HepG2 (cell line): ENCODE measurements at regions of chr2 and their contacts with region 1.

Region 1: DNA sequence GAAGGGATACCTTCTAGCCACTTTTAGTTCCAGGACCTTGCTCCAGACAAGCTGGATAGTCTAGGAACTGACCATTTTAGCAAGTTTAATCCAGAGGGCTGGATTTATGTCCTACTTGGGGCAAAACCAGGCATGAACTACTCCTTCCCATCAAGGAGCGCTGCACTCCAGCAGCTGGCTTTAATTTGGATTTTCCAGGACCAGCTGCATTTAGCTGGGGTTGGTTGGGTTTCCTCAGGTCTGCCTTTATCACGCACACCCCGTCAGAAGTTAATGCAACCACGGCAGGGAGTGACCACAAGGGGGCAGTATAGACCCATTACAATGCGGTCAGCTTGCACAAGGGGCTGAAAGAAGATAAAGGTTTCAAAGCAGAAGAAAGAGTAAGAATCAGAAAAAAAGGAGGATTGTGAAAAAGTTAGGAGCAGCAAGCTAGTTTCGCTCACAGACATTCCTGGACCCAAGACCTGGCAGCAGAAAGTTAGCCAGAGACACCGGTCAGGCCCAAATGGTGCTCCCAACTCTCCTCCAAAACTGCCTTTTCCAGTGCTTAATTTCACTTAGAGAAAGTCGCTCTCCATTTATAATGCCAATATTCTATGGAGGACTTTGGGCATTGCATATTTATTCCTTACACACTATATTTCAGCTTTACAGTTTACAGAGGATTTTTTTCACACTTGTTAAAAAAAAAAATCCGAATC is 40.1 kb downstream of the SLC4A1AP start:
- DNase-seq: peak; percentile 80
- ATAC-seq: peak; percentile 85
- H3K4me3 ChIP-seq: no peak overlapping the region
- H3K27ac ChIP-seq: no peak overlapping the region
- H3K4me1 ChIP-seq: peaks cover 55% of the 10 kb centered on the region
- H3K27me3 ChIP-seq: no peaks in the 10 kb centered on the region
- CTCF ChIP-seq: peak; percentile 96
- EP300 ChIP-seq: no peak
- POLR2A ChIP-seq: no peak
- RAD21 ChIP-seq: peak; percentile 87

Region 2: GRCh38 chr2:27683390-27684071 is 20.3 kb before region 1 on chr2:
- CTCF ChIA-PET with region 1: interaction called, 12 read pairs
- POLR2A ChIA-PET with region 1: no interaction called
- in situ Hi-C with region 1: no loop called
- intact Hi-C with region 1: no loop called
- DNase-seq: peak; percentile 97
- ATAC-seq: peak; percentile 96
- H3K4me3 ChIP-seq: no peak overlapping the region
- H3K27ac ChIP-seq: peak overlapping the region; percentile 7
- H3K4me1 ChIP-seq: peaks cover 11% of the 10 kb centered on the region
- H3K27me3 ChIP-seq: no peaks in the 10 kb centered on the region
- CTCF ChIP-seq: peak; percentile 97
- EP300 ChIP-seq: 0 out of 4 replicates have a peak, but pooled peaks of 1 of the 2 experiments have one; percentile 14
- POLR2A ChIP-seq: no peak
- RAD21 ChIP-seq: peak; percentile 82

Region 3: GRCh38 chr2:27723372-27724144 is 19.8 kb after region 1 on chr2:
- CTCF ChIA-PET with region 1: no interaction called
- POLR2A ChIA-PET with region 1: interaction called, 17 read pairs
- in situ Hi-C with region 1: no loop called
- intact Hi-C with region 1: no loop called
- DNase-seq: peak; percentile 75
- ATAC-seq: peak; percentile 79
- H3K4me3 ChIP-seq: peak overlapping the region; percentile 22 to 69 (median 33); a peak in 4 of 6 replicates
- H3K27ac ChIP-seq: no peak overlapping the region
- H3K4me1 ChIP-seq: peaks cover 58% of the 10 kb centered on the region
- H3K27me3 ChIP-seq: no peaks in the 10 kb centered on the region
- CTCF ChIP-seq: peak; percentile 94
- EP300 ChIP-seq: no peak
- POLR2A ChIP-seq: no peak
- RAD21 ChIP-seq: peak; percentile 85

Region 4: GRCh38 chr2:27771548-27772335 is 68.0 kb after region 1 on chr2 and contains the start of gene MRPL33:
- CTCF ChIA-PET with region 1: no interaction called
- POLR2A ChIA-PET with region 1: interaction called, 3 read pairs
- in situ Hi-C with region 1: no loop called
- intact Hi-C with region 1: loop called (anchors 5 kb)
- DNase-seq: peak; percentile 93
- ATAC-seq: peak; percentile 97
- H3K4me3 ChIP-seq: peak within 1 kb of the TSS; percentile 93 to 98 (median 94)
- H3K27ac ChIP-seq: peak within 1 kb of the TSS; percentile 85
- H3K4me1 ChIP-seq: peaks cover 39% of the 10 kb centered on the region
- H3K27me3 ChIP-seq: no peaks in the 10 kb centered on the region; a peak in 1 of 5 replicates
- CTCF ChIP-seq: peak; percentile 33
- EP300 ChIP-seq: peak in 1 of 2 experiments; percentile 54; a peak in 1 of 4 replicates
- POLR2A ChIP-seq: peak; percentile 91 to 92
- RAD21 ChIP-seq: peak; percentile 35; the same call in 1 of the 2 replicates
- total RNA-seq, gene MRPL33: 218 and 227 TPM in 2 replicates

Region 5: DNA sequence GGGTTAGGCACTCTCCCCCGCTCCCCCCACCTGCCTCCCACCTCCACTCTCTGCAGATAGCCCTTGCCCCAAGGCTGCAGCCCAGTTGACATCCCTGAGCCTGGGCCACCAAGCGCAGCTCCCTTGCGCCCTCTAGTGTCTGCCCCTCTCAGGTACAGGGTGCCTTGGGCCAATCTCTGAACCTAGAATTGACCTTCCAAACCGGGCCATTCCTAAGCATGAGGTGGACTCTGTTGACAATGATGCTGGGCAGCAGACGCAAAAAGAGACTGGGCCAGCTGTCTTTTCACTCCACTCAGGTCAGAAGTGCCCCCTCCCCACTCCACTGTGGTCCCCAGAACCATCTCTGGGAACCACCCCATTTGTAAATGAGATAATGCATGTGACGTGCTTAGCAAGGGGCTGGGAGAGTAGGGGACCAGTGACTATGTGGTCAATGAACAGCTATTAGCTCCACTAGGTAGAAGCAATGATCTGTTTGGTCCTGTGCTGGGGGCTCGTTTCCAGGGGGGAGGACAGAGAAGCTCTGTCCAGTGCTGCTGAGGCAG is 748.8 kb after region 1 on chr2:
- CTCF ChIA-PET with region 1: interaction called, 14 read pairs
- POLR2A ChIA-PET with region 1: no interaction called
- in situ Hi-C with region 1: no loop called
- intact Hi-C with region 1: loop called (anchors 1 kb)
- DNase-seq: peak; percentile 58
- ATAC-seq: peak; percentile 92
- H3K4me3 ChIP-seq: no peak overlapping the region
- H3K27ac ChIP-seq: no peak overlapping the region
- H3K4me1 ChIP-seq: no peaks in the 10 kb centered on the region
- H3K27me3 ChIP-seq: peaks cover 0 to 7% of the 10 kb centered on the region in 2 experiments; a peak in 3 of 5 replicates
- CTCF ChIP-seq: peak; percentile 99
- EP300 ChIP-seq: no peak
- POLR2A ChIP-seq: no peak
- RAD21 ChIP-seq: peak; percentile 91

Region 6: DNA sequence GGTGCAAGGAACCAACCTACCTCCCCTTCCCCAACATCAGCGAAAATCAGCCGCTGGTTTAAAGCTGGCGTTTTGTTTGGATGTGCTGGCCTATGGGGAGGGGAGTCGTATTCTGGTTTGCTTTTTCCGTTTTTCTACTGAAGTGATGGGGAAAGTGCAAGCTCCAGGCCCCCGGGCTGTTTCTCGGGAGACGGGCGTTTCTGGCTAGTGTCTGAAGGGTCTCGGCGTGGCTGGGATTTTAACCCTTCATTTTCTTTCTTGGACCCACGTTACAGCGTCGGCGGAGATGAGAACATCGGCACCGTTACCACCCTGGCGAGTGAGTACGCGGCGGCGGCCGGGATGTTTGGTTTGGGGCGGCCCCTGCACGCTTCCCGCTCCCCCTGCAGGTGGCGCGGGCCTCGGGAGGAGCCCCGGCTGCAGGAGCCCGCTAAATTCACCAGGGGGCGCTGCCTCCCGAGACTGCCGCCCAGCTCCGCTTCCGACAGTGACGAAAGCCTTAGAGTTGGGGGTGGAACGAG is 862.8 kb after region 1 on chr2:
- CTCF ChIA-PET with region 1: no interaction called
- POLR2A ChIA-PET with region 1: no interaction called
- in situ Hi-C with region 1: no loop called
- intact Hi-C with region 1: loop called (anchors 10 kb)
- DNase-seq: peak; percentile 65
- ATAC-seq: peak; percentile 96
- H3K4me3 ChIP-seq: peak overlapping the region; percentile 54 to 77 (median 69)
- H3K27ac ChIP-seq: no peak overlapping the region
- H3K4me1 ChIP-seq: peaks cover 7% of the 10 kb centered on the region
- H3K27me3 ChIP-seq: peaks cover 0 to 28% of the 10 kb centered on the region in 2 experiments; a peak in 4 of 5 replicates
- CTCF ChIP-seq: peak; percentile 96
- EP300 ChIP-seq: 0 out of 4 replicates have a peak, but pooled peaks of 1 of the 2 experiments have one; percentile 53
- POLR2A ChIP-seq: no peak
- RAD21 ChIP-seq: peak; percentile 96